Heart left ventricle (tissue), 16 donors: ENCODE measurements at regions of chr9 and their contacts with region 1.

Region 1: GRCh38 chr9:132800038-132800648 is 77.9 kb downstream of the AK8 start:
- DNase-seq: peak; percentile 50 to 87 (median 68)
- ATAC-seq: peak; percentile 63 to 82 (median 70)
- H3K4me3 ChIP-seq: no peak overlapping the region
- H3K27ac ChIP-seq: peak overlapping the region in 1 of 12 donors; percentile 62
- H3K4me1 ChIP-seq: peaks cover 0 to 27% (median 15%) of the 10 kb centered on the region in 12 donors
- H3K27me3 ChIP-seq: peaks cover 0 to 12% (median 0%) of the 10 kb centered on the region in 9 donors
- CTCF ChIP-seq: peak; percentile 77 to 90 (median 88)
- POLR2A ChIP-seq: no peak

Region 2: GRCh38 chr9:132443951-132444607 is 356.1 kb before region 1 on chr9:
- intact Hi-C with region 1: no loop called
- DNase-seq: no peak
- ATAC-seq: no peak
- H3K4me3 ChIP-seq: no peak overlapping the region
- H3K27ac ChIP-seq: no peak overlapping the region
- H3K4me1 ChIP-seq: no peaks in the 10 kb centered on the region
- H3K27me3 ChIP-seq: peaks cover 0 to 15% (median 0%) of the 10 kb centered on the region in 9 donors
- CTCF ChIP-seq: no peak
- POLR2A ChIP-seq: no peak

Region 3: DNA sequence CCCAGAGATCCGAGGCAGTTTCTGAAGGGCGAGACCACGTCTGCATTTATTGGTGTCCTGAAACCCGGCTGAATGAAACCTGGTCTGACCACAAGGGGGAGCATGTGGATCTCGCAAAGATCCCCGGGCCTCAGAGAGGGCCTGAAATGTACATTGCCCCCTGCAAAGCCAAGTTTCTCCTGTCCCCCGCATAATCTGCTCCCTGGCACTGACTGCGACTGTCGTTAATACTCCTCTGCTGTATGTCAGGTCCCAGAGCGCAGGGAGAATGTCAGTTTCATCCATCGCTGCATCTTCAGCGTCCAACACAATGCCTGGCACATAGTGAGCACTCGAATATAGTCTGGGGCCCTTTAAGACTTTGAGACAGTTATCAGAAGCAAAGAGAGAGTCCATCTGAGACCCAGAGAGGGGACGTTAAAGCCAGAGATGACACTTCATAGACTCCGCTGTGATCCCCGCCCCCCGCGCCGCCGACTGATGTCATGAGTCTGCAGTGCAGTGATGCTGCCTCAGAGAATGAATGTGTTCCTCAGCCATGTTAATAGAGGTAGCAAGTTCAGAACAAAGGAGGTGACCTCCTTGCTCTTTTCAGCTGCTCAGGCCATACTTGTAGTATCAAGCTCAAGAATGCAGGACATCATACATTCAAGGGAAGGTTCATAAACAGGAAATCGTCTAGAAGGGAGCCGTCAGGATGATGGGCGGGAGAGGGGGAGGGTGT is 292.2 kb before region 1 on chr9:
- intact Hi-C with region 1: loop called (anchors 1 to 2 kb)
- DNase-seq: peak in 4 of 5 donors; percentile 38 to 56 (median 53)
- ATAC-seq: peak; percentile 49 to 71 (median 60)
- H3K4me3 ChIP-seq: no peak overlapping the region
- H3K27ac ChIP-seq: no peak overlapping the region
- H3K4me1 ChIP-seq: peaks cover 0 to 4% (median 0%) of the 10 kb centered on the region in 12 donors
- H3K27me3 ChIP-seq: peaks cover 0 to 36% (median 3%) of the 10 kb centered on the region in 9 donors
- CTCF ChIP-seq: peak; percentile 62 to 81 (median 74)
- POLR2A ChIP-seq: no peak

Region 4: GRCh38 chr9:132575005-132575609 is 225.0 kb before region 1 on chr9:
- intact Hi-C with region 1: loop called in 1 of 10 experiments (anchors 10 kb)
- DNase-seq: peak; percentile 54 to 83 (median 66)
- ATAC-seq: peak; percentile 59 to 91 (median 85)
- H3K4me3 ChIP-seq: no peak overlapping the region
- H3K27ac ChIP-seq: no peak overlapping the region
- H3K4me1 ChIP-seq: peaks cover 0 to 5% (median 0%) of the 10 kb centered on the region in 12 donors
- H3K27me3 ChIP-seq: peaks cover 22 to 64% (median 34%) of the 10 kb centered on the region in 9 donors
- CTCF ChIP-seq: peak; percentile 53 to 82 (median 70)
- POLR2A ChIP-seq: no peak

Region 5: GRCh38 chr9:132669698-132670456 is 130.3 kb before region 1 on chr9 and contains the start of gene DDX31:
- intact Hi-C with region 1: loop called in 6 of 10 experiments (anchors 2 to 10 kb)
- DNase-seq: peak; percentile 88 to 93 (median 90)
- ATAC-seq: peak; percentile 97 to 99 (median 98)
- H3K4me3 ChIP-seq: peak within 1 kb of the TSS; percentile 61 to 98 (median 88)
- H3K27ac ChIP-seq: peak within 1 kb of the TSS; percentile 80 to 100 (median 97)
- H3K4me1 ChIP-seq: peaks cover 0 to 44% (median 27%) of the 10 kb centered on the region in 12 donors
- H3K27me3 ChIP-seq: no peaks in the 10 kb centered on the region
- CTCF ChIP-seq: no peak
- POLR2A ChIP-seq: peak in 1 of 2 donors; percentile 34
- total RNA-seq, gene DDX31: 4.4 to 7.0 (median 5.1) TPM

Region 6: DNA sequence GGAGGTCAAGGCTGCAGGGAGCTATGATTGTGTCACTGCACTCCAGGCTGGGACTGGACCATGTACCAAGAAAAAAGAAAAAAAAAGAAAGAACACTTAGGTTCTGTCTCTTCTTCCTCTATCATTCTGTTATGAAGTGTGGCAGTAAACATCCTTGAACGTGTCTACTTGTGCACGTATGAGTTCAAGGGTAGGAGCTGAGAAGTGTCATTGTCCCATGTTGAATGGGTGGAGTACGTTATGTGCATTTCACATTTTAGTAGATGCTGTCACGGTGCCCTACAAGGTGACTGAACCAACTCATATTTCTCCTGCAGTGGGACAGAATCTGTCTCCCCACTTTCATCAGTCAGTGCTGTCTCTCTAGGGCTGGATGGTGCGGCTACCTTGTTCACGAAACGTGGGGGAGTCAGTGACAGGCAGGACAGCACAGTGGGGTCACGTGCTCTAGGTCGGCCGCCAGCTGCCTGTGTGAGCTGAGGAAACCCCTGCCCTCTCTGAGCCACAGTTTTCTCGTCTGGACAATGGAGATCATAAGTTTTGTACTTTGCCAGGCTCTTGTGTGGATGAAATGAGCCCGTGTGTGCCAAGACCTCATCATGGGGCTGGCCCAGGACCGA is 82.7 kb before region 1 on chr9:
- intact Hi-C with region 1: no loop called
- DNase-seq: no peak
- ATAC-seq: no peak
- H3K4me3 ChIP-seq: no peak overlapping the region
- H3K27ac ChIP-seq: no peak overlapping the region
- H3K4me1 ChIP-seq: no peaks in the 10 kb centered on the region
- H3K27me3 ChIP-seq: peaks cover 0 to 9% (median 0%) of the 10 kb centered on the region in 9 donors
- CTCF ChIP-seq: no peak
- POLR2A ChIP-seq: no peak

Region 7: DNA sequence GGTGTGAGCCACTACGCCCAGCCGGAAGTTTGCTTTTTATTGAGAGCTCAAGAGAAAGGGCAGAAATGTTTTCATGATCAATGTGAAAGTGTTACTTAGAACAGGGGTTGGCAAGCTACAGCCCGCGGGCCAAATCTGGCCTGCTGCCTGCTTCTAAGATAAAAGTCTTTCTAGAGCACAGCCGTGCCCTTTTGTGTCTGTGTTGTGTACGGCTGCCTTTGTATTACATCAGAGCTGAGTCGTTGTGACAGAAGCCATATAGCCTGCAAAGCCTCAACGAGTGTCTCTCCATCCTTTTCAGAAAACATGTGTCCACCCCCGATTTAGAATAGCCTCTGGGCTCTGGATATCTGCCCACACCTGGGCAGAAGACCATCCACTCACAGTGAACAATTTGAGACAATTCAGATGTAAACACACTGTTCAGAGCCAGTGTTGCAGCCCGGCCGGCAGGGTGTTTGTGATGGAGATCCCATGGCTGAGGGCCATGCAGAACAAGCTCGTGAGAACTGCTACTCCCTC is 49.1 kb after region 1 on chr9:
- intact Hi-C with region 1: no loop called
- DNase-seq: peak in 2 of 5 donors; percentile 51 to 65
- ATAC-seq: peak; percentile 77 to 93 (median 90)
- H3K4me3 ChIP-seq: no peak overlapping the region
- H3K27ac ChIP-seq: peak overlapping the region in 3 of 12 donors; percentile 15 to 71 (median 28)
- H3K4me1 ChIP-seq: no peaks in the 10 kb centered on the region
- H3K27me3 ChIP-seq: no peaks in the 10 kb centered on the region
- CTCF ChIP-seq: no peak
- POLR2A ChIP-seq: no peak

Region 8: DNA sequence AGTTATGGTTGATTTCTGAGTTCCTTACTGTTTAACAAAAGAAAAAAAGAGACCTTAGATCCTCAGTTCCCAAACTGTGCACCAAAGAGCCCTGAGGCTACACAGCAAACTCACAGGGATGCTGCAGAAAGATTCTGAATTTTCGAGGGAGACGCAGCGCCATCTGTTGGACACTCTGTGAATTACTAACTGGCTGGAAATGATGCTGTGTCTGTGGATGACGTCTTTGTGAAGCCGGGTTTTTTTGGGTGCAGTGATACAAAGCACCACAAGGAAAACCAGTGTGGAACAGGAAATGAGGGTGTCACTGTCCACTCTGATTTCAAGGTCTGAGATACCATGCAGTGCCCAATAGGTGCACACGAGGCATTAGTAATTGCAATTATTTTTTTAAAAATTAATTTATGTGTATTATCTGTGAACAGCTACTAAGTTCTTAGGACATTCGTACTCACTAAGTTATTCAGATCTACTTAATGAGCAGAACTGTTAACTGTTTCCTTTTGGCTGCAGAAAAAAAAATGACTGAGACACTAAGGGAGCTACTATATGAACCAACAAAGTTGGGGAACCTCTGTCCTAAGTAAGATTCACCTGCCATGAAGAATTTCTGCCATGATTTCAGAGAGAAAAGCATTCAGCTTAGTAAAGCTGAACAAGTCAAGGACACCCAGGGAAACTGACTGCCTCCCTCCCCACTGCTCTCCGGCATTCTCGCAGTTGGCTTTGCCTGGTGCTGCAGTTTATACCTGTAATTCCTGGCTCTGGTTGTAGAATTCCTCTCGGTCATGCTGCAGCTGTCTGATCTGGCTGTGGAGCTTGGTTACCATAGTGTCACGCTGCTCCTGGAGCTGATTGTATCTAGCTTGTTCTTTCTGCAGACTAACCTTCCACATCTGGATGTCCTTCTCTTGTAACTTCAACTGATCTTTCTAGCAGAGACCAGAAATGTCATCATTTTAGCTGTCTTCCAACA is 102.0 kb after region 1 on chr9:
- intact Hi-C with region 1: loop called in 1 of 10 experiments (anchors 5 kb)
- DNase-seq: peak in 4 of 5 donors; percentile 44 to 52 (median 48)
- ATAC-seq: peak; percentile 22 to 70 (median 68)
- H3K4me3 ChIP-seq: no peak overlapping the region
- H3K27ac ChIP-seq: no peak overlapping the region
- H3K4me1 ChIP-seq: peaks cover 0 to 16% (median 1%) of the 10 kb centered on the region in 12 donors
- H3K27me3 ChIP-seq: no peaks in the 10 kb centered on the region
- CTCF ChIP-seq: peak; percentile 79 to 96 (median 88)
- POLR2A ChIP-seq: no peak

Region 9: DNA sequence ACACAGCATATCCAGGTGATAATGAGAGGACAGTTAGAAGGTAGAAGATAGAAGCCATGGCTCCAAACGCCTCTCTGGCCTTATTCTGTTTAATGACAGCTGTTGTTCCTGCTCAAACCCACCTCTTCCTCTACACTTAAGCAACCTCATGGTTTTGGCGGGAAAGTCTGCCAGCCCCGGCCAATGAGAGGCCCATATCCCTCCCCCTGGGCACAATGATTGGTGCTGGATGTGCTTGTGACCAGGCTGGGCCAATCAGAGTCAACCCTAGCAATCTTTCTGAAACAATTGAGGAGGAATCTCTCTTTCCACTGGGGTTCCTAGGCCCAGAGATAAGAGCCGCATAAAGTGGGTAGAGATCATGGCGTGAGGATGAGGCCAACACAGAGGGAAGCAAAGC is 173.6 kb after region 1 on chr9:
- intact Hi-C with region 1: loop called in 5 of 10 experiments (anchors 5 to 10 kb)
- DNase-seq: no peak
- ATAC-seq: no peak
- H3K4me3 ChIP-seq: no peak overlapping the region
- H3K27ac ChIP-seq: no peak overlapping the region
- H3K4me1 ChIP-seq: peaks cover 0 to 11% (median 0%) of the 10 kb centered on the region in 12 donors
- H3K27me3 ChIP-seq: peaks cover 0 to 39% (median 8%) of the 10 kb centered on the region in 9 donors
- CTCF ChIP-seq: no peak
- POLR2A ChIP-seq: no peak